ENCODE measurements at regions of chr3 and their contacts with region 1.

Region 1: DNA sequence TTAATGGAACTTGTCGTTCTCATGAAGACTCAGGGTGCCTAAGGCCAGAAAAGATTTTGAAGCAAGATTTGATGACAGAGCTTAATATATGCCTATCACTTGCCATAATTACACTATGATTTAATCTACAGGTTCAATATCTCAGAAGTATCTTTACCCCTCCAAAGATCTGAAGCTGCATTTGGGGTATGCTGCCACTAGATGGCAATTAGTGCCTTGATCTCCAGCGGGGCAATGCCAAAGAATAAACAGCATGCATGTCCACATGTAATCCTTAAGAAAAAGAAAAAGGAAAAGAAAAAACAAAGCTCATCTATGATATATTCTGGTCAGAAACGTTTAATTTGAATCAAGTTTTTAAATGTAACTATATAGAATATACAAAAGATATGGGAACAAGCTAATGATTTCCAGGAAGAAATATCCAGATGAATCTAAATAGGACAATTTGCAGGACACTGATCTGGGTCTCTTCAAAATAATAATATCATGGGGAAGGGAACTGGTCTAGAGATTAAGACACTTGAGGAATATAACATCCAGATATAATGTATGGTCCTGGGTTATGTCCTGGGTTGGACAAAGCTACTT is 55.0 kb upstream of the SOX14 start:
- DNase-seq: no peak
- H3K4me3 ChIP-seq: no peak overlapping the region
- H3K27ac ChIP-seq: no peak overlapping the region
- H3K4me1 ChIP-seq: no peaks in the 10 kb centered on the region
- H3K27me3 ChIP-seq: no peaks in the 10 kb centered on the region
- CTCF ChIP-seq: peak; percentile 9 to 80 (median 73)
- EP300 ChIP-seq: no peak
- POLR2A ChIP-seq: no peak
- RAD21 ChIP-seq: peak; percentile 90 to 92

Region 2: DNA sequence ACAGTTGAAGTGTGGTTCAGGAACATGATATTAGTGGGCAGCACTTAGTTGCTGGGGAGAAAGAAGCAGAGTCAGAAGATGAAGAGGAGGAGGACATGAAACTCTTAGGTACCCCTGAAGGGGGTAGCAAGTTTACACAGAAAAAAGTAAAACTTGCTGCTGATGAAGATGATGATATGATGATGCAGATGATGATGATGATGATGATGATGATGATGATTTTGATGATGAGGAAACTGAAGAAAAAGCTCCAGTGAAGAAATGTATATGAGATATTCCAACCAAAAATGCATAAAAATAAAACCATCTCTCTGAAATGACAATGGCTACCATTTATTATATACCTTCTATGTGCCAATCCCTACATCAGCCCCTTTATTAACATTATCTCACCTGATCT is 15.1 kb after region 1 on chr3:
- CTCF ChIA-PET with region 1: interaction called, 22 read pairs
- POLR2A ChIA-PET with region 1: no interaction called
- DNase-seq: no peak
- H3K4me3 ChIP-seq: no peak overlapping the region
- H3K27ac ChIP-seq: no peak overlapping the region
- H3K4me1 ChIP-seq: no peaks in the 10 kb centered on the region
- H3K27me3 ChIP-seq: no peaks in the 10 kb centered on the region
- CTCF ChIP-seq: no peak
- EP300 ChIP-seq: no peak
- POLR2A ChIP-seq: no peak
- RAD21 ChIP-seq: no peak

Region 3: GRCh38 chr3:137764001-137764433 is 54.9 kb after region 1 on chr3 and contains the start of gene SOX14:
- CTCF ChIA-PET with region 1: interaction called, 14 read pairs
- POLR2A ChIA-PET with region 1: interaction called, 3 read pairs
- DNase-seq: peak; percentile 89 to 93
- H3K4me3 ChIP-seq: peak within 1 kb of the TSS; percentile 25 to 55 (median 36)
- H3K27ac ChIP-seq: no peak within 1 kb of the TSS
- H3K4me1 ChIP-seq: peaks cover 12 to 71% (median 55%) of the 10 kb centered on the region in 4 experiments
- H3K27me3 ChIP-seq: peaks cover 79 to 99% (median 95%) of the 10 kb centered on the region in 4 experiments
- CTCF ChIP-seq: no peak
- EP300 ChIP-seq: no peak
- POLR2A ChIP-seq: no peak
- RAD21 ChIP-seq: no peak
- total RNA-seq, gene SOX14: 0.21 and 0.50 TPM in 2 replicates

Region 4: GRCh38 chr3:137792626-137793271 is 83.6 kb after region 1 on chr3:
- CTCF ChIA-PET with region 1: interaction called, 40 read pairs
- POLR2A ChIA-PET with region 1: no interaction called
- DNase-seq: peak in 1 of 2 experiments; percentile 69
- H3K4me3 ChIP-seq: no peak overlapping the region
- H3K27ac ChIP-seq: no peak overlapping the region
- H3K4me1 ChIP-seq: peaks cover 0 to 3% (median 0%) of the 10 kb centered on the region in 4 experiments; a peak in 1 of 7 replicates
- H3K27me3 ChIP-seq: no peaks in the 10 kb centered on the region
- CTCF ChIP-seq: peak; percentile 49 to 89 (median 82)
- EP300 ChIP-seq: no peak
- POLR2A ChIP-seq: no peak
- RAD21 ChIP-seq: peak; percentile 92 to 96

Region 5: GRCh38 chr3:137970914-137971831 is 262.1 kb after region 1 on chr3:
- CTCF ChIA-PET with region 1: interaction called, 37 read pairs
- POLR2A ChIA-PET with region 1: interaction called, 3 read pairs
- DNase-seq: peak; percentile 73 to 93
- H3K4me3 ChIP-seq: no peak overlapping the region
- H3K27ac ChIP-seq: no peak overlapping the region
- H3K4me1 ChIP-seq: no peaks in the 10 kb centered on the region
- H3K27me3 ChIP-seq: no peaks in the 10 kb centered on the region; a peak in 1 of 7 replicates
- CTCF ChIP-seq: peak; percentile 90 to 95 (median 92)
- EP300 ChIP-seq: no peak
- POLR2A ChIP-seq: no peak
- RAD21 ChIP-seq: peak; percentile 95 to 97

Measured in H1 (cell line).